Panc1 (cell line): ENCODE measurements at regions of chr1 and their contacts with region 1.

Region 1: GRCh38 chr1:39609618-39610331 is 29.7 kb downstream of the HEYL start:
- DNase-seq: peak; percentile 13
- ATAC-seq: peak; percentile 86
- H3K4me3 ChIP-seq: no peak overlapping the region
- H3K27ac ChIP-seq: no peak overlapping the region
- H3K4me1 ChIP-seq: no peaks in the 10 kb centered on the region
- H3K27me3 ChIP-seq: no peaks in the 10 kb centered on the region
- CTCF ChIP-seq: peak; percentile 94

Region 2: GRCh38 chr1:38609166-38610025 is 1000.4 kb before region 1 on chr1:
- CTCF ChIA-PET with region 1: interaction called, 17 read pairs
- POLR2A ChIA-PET with region 1: no interaction called
- in situ Hi-C with region 1: no loop called
- intact Hi-C with region 1: no loop called
- DNase-seq: no peak
- ATAC-seq: no peak
- H3K4me3 ChIP-seq: no peak overlapping the region
- H3K27ac ChIP-seq: no peak overlapping the region
- H3K4me1 ChIP-seq: no peaks in the 10 kb centered on the region
- H3K27me3 ChIP-seq: peaks cover 3% of the 10 kb centered on the region; the same call in 1 of the 2 replicates
- CTCF ChIP-seq: no peak

Region 3: DNA sequence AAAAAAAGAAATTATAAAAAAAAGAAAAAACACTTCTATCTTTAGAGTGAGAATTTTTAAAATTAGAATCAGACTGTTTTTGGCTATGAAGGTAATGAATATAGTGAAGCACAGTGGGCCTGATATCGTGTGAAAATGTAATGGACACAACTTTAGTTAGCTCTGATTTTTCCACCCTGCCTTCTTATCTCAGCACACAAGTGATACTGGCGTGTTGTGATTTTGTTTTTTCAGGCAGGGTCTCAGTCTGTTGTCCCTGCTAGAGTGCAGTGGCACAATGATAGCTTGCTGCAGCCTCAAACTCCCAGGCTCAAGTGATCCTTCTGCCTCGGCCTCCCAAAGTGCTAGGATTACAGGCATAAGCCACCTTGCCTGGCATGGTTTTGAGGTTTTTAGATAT is 382.9 kb before region 1 on chr1:
- CTCF ChIA-PET with region 1: no interaction called
- POLR2A ChIA-PET with region 1: interaction called, 13 read pairs
- in situ Hi-C with region 1: no loop called
- intact Hi-C with region 1: no loop called
- DNase-seq: no peak
- ATAC-seq: no peak
- H3K4me3 ChIP-seq: no peak overlapping the region
- H3K27ac ChIP-seq: no peak overlapping the region
- H3K4me1 ChIP-seq: peaks cover 4% of the 10 kb centered on the region; the same call in 1 of the 2 replicates
- H3K27me3 ChIP-seq: no peaks in the 10 kb centered on the region
- CTCF ChIP-seq: no peak

Region 4: DNA sequence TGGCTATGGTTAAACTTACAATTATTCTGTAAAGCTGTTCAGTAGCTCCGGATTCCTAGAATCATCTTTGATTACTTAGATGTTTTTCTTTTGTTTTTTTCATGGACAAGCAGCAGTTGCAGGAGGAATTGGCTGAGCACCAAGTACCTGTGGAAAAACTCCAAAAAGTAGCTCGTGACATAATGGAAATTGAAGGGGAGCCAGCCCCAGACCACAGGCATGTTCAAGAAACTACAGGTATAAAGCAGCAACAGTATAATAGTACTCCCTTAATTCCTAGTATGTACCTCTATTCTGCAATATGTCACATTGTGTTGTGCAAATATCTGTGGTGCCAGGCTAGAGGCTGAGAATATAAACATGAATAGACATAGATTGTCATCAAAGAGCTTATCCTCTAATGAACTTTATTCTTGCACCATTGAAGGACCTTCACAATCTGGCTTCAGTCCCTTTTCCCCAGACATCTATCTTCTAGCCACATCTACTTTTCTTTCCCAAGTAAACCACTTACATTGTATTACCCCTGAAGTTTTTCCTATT is 250.7 kb before region 1 on chr1:
- CTCF ChIA-PET with region 1: no interaction called
- POLR2A ChIA-PET with region 1: no interaction called
- in situ Hi-C with region 1: no loop called
- intact Hi-C with region 1: no loop called
- DNase-seq: no peak
- ATAC-seq: no peak
- H3K4me3 ChIP-seq: no peak overlapping the region
- H3K27ac ChIP-seq: no peak overlapping the region
- H3K4me1 ChIP-seq: no peaks in the 10 kb centered on the region
- H3K27me3 ChIP-seq: no peaks in the 10 kb centered on the region
- CTCF ChIP-seq: no peak

Region 5: DNA sequence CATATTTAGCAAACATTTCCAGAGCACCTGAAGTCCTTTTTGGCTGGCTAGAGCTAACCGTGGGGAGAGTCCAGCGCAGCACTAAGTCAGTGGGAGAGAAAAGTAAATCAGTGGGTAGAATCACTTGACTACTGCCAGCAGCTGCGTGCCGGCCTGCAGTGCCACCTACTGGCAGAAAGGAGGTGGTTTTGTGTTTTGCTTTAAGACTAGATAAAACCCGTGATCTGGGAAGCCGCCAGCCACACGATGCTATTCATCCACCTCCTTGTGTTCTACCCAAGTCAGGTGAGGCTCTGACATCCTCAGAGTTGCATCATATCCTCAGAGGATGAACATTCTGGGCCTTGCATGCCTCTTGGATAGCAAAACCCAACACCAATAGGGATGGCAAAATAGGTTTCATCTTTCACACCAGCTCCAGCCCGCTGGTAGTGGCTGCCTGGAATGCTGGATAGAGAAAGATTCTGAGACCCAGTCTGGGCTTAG is 43.8 kb after region 1 on chr1:
- CTCF ChIA-PET with region 1: interaction called, 13 read pairs
- POLR2A ChIA-PET with region 1: no interaction called
- in situ Hi-C with region 1: no loop called
- intact Hi-C with region 1: loop called (anchors 1 kb)
- DNase-seq: peak; percentile 70
- ATAC-seq: peak; percentile 84
- H3K4me3 ChIP-seq: no peak overlapping the region
- H3K27ac ChIP-seq: no peak overlapping the region
- H3K4me1 ChIP-seq: no peaks in the 10 kb centered on the region
- H3K27me3 ChIP-seq: peaks cover 3% of the 10 kb centered on the region; the same call in 1 of the 2 replicates
- CTCF ChIP-seq: peak; percentile 96